HEK293 (cell line): ENCODE measurements at regions of chr12 and their contacts with region 1.

Region 1: DNA sequence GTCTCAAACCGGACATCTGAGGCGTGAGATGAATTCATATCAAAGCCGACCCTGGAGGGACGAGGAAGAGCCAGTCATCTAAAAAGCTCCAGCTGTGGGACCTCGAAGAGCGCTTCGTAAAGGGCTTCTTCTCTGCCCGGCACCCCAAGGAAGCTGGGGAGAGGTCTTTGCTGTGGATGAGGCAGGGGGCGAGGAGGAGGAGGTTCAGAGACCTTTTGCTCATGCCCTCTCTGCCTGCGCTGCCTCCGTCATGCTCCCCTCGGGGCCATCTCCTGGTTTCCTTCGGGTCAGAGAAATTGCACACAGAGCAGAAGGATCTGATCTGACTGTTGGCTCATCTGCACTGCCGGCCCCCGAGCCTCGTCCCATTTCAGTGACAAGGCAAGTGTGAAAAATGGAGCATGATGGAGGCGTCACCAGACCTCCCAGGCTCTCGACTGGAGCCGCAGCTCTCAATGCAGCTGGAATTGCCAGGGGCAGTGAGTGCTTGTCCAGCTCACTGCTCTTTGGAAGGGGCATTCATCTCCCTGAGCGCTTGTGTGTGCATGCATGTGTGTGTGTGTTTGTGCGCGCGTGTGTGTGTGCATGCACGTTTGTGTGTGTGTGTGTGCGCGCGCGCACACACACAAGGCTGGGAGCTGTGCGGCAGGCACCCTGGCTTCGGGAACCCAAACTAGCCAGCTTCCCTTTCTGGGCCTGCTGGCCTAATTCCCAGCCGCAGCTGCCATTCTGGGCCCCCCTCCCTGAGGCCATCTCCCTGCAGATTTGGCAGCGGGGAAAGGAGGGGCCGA is 9.2 kb downstream of the CABP1 start:
- H3K4me3 ChIP-seq: no peak overlapping the region
- H3K27ac ChIP-seq: no peak overlapping the region
- H3K4me1 ChIP-seq: no peaks in the 10 kb centered on the region
- CTCF ChIP-seq: no peak; the same call in 1 of the 2 replicates

Region 2: GRCh38 chr12:120580787-120581723 is 68.6 kb before region 1 on chr12 and contains the start of gene POP5:
- CTCF ChIA-PET with region 1: interaction called, 77 read pairs
- POLR2A ChIA-PET with region 1: interaction called, 12 read pairs
- H3K4me3 ChIP-seq: peak within 1 kb of the TSS; percentile 83
- H3K27ac ChIP-seq: peak within 1 kb of the TSS; percentile 60; the same call in 1 of the 2 replicates
- H3K4me1 ChIP-seq: no peaks in the 10 kb centered on the region
- CTCF ChIP-seq: no peak

Region 3: GRCh38 chr12:120625557-120626419 is 23.8 kb before region 1 on chr12:
- CTCF ChIA-PET with region 1: interaction called, 16 read pairs
- POLR2A ChIA-PET with region 1: interaction called, 4 read pairs
- H3K4me3 ChIP-seq: no peak overlapping the region
- H3K27ac ChIP-seq: no peak overlapping the region
- H3K4me1 ChIP-seq: no peaks in the 10 kb centered on the region
- CTCF ChIP-seq: 0 out of 2 replicates have a peak, but pooled peaks have one; percentile 26

Region 4: DNA sequence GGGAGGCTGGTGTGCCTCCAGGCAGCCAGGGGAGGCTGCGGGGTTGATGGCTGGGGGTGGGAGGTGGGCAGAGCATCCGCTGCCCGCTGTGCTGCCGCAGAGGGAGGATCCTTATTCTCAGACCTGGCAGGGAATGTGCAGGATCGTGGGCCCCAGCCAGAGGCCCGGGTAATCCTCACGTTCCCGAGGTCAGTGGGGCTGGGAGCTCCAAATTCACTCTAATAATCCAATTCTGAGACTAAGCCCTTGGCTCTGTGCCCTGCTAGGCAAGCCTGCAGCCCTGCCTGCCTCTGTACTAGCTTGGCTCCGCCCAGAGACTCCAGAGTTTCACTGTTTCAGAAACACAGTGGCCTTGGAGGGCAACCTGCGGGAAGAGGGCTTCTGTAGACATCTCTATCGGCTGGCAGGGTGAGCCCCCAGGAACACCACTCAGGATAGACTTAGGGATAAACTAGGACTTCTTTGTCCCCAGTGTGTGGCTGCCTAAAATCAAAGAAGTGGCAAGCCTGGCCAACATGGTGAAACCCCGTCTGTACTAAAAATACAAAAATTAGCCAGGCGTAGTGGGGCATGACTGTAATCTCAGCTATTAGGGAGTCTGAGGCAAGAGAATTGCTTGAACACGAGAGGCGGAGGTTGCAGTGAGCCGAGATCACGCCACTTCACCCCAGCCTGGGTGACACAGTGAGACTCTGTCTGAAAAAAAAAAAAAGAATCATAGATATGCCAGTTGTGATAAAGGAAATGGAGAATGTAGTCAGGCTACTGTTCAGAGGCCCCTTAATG is 19.6 kb after region 1 on chr12:
- CTCF ChIA-PET with region 1: interaction called, 23 read pairs
- POLR2A ChIA-PET with region 1: interaction called, 4 read pairs
- H3K4me3 ChIP-seq: no peak overlapping the region
- H3K27ac ChIP-seq: no peak overlapping the region
- H3K4me1 ChIP-seq: no peaks in the 10 kb centered on the region
- CTCF ChIP-seq: no peak

Region 5: GRCh38 chr12:120684523-120684932 is 34.9 kb after region 1 on chr12:
- CTCF ChIA-PET with region 1: interaction called, 12 read pairs
- POLR2A ChIA-PET with region 1: interaction called, 5 read pairs
- H3K4me3 ChIP-seq: no peak overlapping the region
- H3K27ac ChIP-seq: no peak overlapping the region
- H3K4me1 ChIP-seq: peaks cover 6% of the 10 kb centered on the region; the same call in 1 of the 2 replicates
- CTCF ChIP-seq: no peak

Region 6: DNA sequence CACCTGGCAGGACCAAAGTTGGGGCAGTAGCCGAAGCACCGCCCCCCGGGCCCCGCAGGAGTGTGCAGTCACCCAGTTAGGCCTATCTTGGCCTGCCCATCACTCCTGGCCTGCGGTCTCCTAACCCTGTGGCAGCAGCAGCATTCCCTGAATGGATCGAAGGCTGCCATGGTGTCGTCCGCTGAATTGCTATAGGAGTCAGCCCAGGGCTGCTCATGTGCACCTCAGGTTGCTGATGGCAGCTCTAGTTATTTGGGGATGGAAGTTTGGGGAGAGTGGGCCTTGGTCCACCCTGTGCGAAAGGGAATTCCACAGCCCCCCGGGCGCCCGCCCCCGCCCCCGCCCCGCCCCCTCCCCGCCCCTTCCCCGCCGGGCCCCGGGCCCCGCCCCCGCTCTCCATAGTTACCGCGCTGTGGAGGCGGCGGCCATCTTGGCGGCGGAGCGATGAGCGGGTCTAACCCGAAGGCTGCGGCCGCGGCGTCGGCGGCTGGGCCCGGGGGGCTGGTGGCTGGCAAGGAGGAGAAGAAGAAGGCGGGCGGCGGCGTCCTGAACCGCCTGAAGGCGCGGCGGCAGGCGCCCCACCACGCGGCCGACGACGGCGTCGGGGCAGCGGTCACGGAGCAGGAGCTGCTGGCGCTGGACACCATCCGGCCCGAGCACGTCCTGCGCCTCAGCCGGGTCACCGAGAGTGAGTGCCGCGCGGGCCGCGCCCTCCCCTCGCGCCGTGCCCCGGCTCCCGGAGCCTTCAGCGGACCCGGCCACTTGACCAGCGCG is 60.6 kb after region 1 on chr12 and contains the start of gene UNC119B:
- CTCF ChIA-PET with region 1: interaction called, 42 read pairs
- POLR2A ChIA-PET with region 1: interaction called, 3 read pairs
- H3K4me3 ChIP-seq: peak within 1 kb of the TSS; percentile 77
- H3K27ac ChIP-seq: peak within 1 kb of the TSS; percentile 91
- H3K4me1 ChIP-seq: peaks cover 3% of the 10 kb centered on the region; the same call in 1 of the 2 replicates
- CTCF ChIP-seq: no peak

Region 7: DNA sequence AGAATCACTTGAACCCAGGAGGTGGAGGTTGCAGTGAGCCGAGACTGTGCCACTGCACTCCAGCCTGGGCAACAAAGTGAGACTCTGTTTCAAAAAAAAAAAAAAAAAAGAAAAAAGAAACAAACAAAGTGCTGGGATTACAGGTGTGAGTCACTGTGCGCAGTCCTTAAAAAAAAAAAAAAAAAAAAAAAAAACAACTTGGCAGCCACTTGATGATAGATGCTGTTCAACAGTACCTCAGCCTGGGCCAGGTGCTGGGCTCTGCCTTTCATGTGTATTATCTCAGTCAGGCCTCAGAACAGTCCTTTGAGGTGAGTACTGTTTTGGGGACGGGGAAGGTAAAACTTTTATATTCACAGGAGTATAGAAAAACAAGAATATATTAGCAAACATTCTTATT is 85.5 kb after region 1 on chr12:
- CTCF ChIA-PET with region 1: no interaction called
- POLR2A ChIA-PET with region 1: no interaction called
- H3K4me3 ChIP-seq: no peak overlapping the region
- H3K27ac ChIP-seq: no peak overlapping the region
- H3K4me1 ChIP-seq: no peaks in the 10 kb centered on the region
- CTCF ChIP-seq: no peak

Region 8: GRCh38 chr12:120914794-120915193 is 265.2 kb after region 1 on chr12:
- CTCF ChIA-PET with region 1: no interaction called
- POLR2A ChIA-PET with region 1: no interaction called
- H3K4me3 ChIP-seq: no peak overlapping the region
- H3K27ac ChIP-seq: no peak overlapping the region
- H3K4me1 ChIP-seq: no peaks in the 10 kb centered on the region
- CTCF ChIP-seq: no peak